Sigmoid colon (tissue), 7 donors: ENCODE measurements at regions of chr22 and their contacts with region 1.

Region 1: GRCh38 chr22:42444077-42444904 is 12.1 kb upstream of the NFAM1 start:
- DNase-seq: peak; percentile 92
- H3K4me3 ChIP-seq: peak overlapping the region; percentile 26 to 48 (median 38)
- H3K27ac ChIP-seq: peak overlapping the region; percentile 64 to 78 (median 72)
- H3K4me1 ChIP-seq: peaks cover 0 to 17% (median 16%) of the 10 kb centered on the region in 4 donors
- H3K27me3 ChIP-seq: no peaks in the 10 kb centered on the region
- CTCF ChIP-seq: peak; percentile 44 to 56 (median 52)
- EP300 ChIP-seq: no peak
- POLR2A ChIP-seq: no peak

Region 2: DNA sequence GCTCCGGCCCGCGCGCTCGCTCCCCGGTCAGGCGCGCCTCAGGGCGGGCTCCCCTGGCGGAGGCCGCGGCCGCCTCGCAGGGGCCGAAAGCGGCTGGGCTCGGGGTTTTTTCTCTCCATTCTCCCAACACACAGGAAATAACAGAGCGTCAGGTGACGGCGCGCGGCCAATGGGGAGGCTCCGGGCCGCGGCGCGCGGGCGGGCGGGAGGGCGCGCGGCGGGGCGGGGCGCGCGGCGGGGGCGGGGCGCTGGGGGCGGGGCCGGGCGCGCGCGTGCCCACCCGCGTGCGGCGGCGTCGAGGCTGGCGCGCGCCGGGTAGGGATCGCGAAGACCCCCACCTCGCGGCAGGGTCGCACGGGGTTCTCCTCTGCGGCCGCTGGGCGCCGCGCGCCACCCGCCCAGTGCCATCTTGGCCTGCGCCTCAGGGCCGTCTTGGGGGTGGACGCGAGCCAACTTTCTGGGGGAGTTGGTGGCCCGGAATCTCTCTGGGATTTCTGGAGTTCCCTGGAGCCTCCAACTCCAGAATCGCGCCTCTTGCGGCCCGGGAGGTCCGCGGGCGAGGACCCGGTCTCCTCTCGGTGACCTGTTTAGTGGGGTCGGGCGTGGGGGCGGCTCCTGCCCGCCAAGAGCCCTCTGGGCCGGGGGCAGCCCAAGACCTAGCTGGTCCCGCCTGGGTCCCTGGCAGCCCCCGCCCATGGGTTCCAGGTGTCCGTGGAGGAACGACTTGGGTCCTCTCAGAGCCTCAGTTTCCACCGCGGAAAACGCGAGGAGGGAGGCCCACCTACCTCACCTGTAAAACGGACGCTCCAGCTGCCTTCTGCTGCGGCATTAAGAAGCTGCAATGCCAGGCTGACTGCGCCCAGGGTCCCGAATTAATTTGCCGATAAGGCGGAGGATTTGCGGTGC is 173.5 kb before region 1 on chr22 and contains the start of gene TCF20:
- intact Hi-C with region 1: loop called (anchors 5 kb)
- DNase-seq: peak; percentile 86
- H3K4me3 ChIP-seq: peak within 1 kb of the TSS; percentile 78 to 100 (median 96)
- H3K27ac ChIP-seq: peak within 1 kb of the TSS; percentile 84 to 88 (median 85)
- H3K4me1 ChIP-seq: peaks cover 0 to 23% (median 16%) of the 10 kb centered on the region in 4 donors
- H3K27me3 ChIP-seq: no peaks in the 10 kb centered on the region
- CTCF ChIP-seq: no peak
- EP300 ChIP-seq: no peak
- POLR2A ChIP-seq: no peak
- total RNA-seq, gene TCF20: 21.6 to 31.0 (median 25.1) TPM